ENCODE measurements at regions of chr15 and their contacts with region 1.

Region 1: DNA sequence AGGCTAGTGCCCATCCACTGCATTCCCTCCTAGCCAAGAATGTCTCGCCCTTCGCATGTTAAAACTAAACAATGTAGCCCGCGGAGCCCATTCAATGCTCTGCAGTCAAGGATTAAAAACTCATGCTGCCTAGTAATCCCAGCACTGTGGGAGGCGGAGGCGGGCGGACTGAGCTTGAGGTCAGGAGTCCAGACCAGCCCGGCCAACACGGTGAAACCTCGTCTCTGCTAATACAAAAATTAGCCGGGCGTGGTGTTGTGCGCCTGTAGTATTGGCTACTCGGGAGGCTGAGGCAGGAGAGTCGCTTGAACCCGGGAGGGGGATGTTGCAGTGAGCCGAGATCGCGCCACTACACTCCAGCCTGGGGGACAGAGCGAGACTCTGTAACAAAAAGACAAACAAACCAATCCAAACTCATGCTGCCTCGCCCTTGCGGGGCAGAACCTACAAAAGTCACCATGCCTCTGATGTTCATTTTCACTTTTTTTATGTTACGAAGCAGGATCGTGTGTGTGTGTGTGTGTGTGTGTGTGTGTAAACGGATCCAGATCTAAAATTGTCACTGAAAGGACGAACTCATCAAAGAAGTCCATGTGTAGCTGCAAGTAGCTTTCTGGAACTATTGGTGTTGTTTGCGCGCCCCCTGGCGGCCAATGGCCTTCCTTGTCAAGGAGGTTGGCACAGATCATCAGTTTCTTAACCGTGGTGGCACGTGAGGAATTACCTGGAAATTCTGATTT is 54.8 kb upstream of the SPESP1 start:
- DNase-seq: peak; percentile 92
- H3K4me3 Mint-ChIP-seq: no peak overlapping the region
- H3K27ac Mint-ChIP-seq: no peak overlapping the region
- H3K4me1 Mint-ChIP-seq: peaks cover 4% of the 10 kb centered on the region
- H3K27me3 Mint-ChIP-seq: peaks cover 19% of the 10 kb centered on the region

Region 2: GRCh38 chr15:68559345-68560310 is 315.9 kb before region 1 on chr15:
- CTCF ChIA-PET with region 1: interaction called, 44 read pairs
- POLR2A ChIA-PET with region 1: no interaction called
- intact Hi-C with region 1: loop called (anchors 5 kb)
- DNase-seq: peak; percentile 78
- H3K4me3 Mint-ChIP-seq: peak overlapping the region; percentile 48
- H3K27ac Mint-ChIP-seq: no peak overlapping the region
- H3K4me1 Mint-ChIP-seq: peaks cover 14% of the 10 kb centered on the region
- H3K27me3 Mint-ChIP-seq: peaks cover 45% of the 10 kb centered on the region

Region 3: GRCh38 chr15:68730471-68730919 is 145.1 kb before region 1 on chr15:
- CTCF ChIA-PET with region 1: interaction called, 16 read pairs
- POLR2A ChIA-PET with region 1: no interaction called
- intact Hi-C with region 1: loop called (anchors 1 kb)
- DNase-seq: peak; percentile 32
- H3K4me3 Mint-ChIP-seq: no peak overlapping the region
- H3K27ac Mint-ChIP-seq: no peak overlapping the region
- H3K4me1 Mint-ChIP-seq: peaks cover 4% of the 10 kb centered on the region
- H3K27me3 Mint-ChIP-seq: peaks cover 3% of the 10 kb centered on the region

Region 4: DNA sequence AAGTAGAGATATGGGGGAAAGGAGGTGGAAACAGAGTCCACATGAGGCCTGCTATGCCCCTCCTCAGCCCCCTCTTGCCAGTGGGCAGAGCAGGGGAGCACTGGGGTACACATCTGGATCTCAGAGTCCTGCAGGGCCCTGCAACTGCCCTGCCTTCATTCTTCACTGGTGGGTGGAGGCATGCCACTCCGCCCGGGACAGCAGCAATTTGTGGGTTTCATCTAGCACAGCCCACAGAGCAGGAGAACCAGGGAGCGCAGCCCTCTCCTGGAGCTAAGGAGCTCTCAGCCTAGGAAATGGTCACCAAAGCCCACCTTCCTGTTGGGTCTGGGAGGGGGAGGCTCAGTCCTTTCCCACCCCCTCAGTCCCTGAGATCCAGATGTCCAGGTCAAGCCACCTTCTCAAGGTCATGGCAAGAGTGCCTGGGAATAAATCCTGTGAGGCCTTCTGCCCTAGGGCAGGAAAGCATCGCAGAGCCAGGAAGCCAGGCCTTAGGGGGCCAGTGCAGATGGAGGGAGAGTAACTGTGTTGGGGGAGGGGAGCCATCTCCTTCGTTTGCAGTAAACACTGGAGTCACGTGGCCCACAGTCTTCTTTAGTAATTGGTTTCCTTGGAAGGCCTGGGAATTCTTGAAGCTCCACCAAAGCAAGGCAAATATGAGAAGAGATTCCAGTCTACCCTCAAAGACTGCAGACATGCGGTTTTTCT is 85.9 kb before region 1 on chr15:
- CTCF ChIA-PET with region 1: interaction called, 58 read pairs
- POLR2A ChIA-PET with region 1: no interaction called
- intact Hi-C with region 1: no loop called
- DNase-seq: no peak
- H3K4me3 Mint-ChIP-seq: no peak overlapping the region
- H3K27ac Mint-ChIP-seq: peak overlapping the region; percentile 28
- H3K4me1 Mint-ChIP-seq: peaks cover 53% of the 10 kb centered on the region
- H3K27me3 Mint-ChIP-seq: no peaks in the 10 kb centered on the region

Region 5: GRCh38 chr15:68862415-68862814 is 13.1 kb before region 1 on chr15:
- CTCF ChIA-PET with region 1: interaction called, 17 read pairs
- POLR2A ChIA-PET with region 1: no interaction called
- intact Hi-C with region 1: no loop called
- DNase-seq: no peak
- H3K4me3 Mint-ChIP-seq: no peak overlapping the region
- H3K27ac Mint-ChIP-seq: no peak overlapping the region
- H3K4me1 Mint-ChIP-seq: no peaks in the 10 kb centered on the region
- H3K27me3 Mint-ChIP-seq: peaks cover 2% of the 10 kb centered on the region

Measured in activated CD4-positive, alpha-beta memory T cell treated with anti-CD3 and anti-CD28 coated beads for 36 hours (primary cell).